GM12878 (cell line): ENCODE measurements at regions of chr1 and their contacts with region 1.

Region 1: GRCh38 chr1:51519048-51519864 is at the start of gene EPS15:
- DNase-seq: no peak
- ATAC-seq: peak; percentile 73
- H3K4me3 ChIP-seq: peak within 1 kb of the TSS; percentile 95
- H3K27ac ChIP-seq: peak within 1 kb of the TSS; percentile 83
- H3K4me1 ChIP-seq: peaks cover 11% of the 10 kb centered on the region
- H3K27me3 ChIP-seq: no peaks in the 10 kb centered on the region
- CTCF ChIP-seq: no peak
- EP300 ChIP-seq: no peak
- POLR2A ChIP-seq: peak; percentile 86
- RAD21 ChIP-seq: peak; percentile 33; the same call in 1 of the 2 replicates
- polyA plus RNA-seq, gene EPS15: 24.7 to 49.5 TPM

Region 2: GRCh38 chr1:51218570-51218969 is 300.7 kb before region 1 on chr1:
- CTCF ChIA-PET with region 1: no interaction called
- POLR2A ChIA-PET with region 1: no interaction called
- RAD21 ChIA-PET with region 1: no interaction called
- SMC1A ChIA-PET with region 1: no interaction called
- in situ Hi-C with region 1: no loop called
- intact Hi-C with region 1: no loop called
- DNase-seq: no peak
- ATAC-seq: no peak
- H3K4me3 ChIP-seq: no peak overlapping the region
- H3K27ac ChIP-seq: no peak overlapping the region
- H3K4me1 ChIP-seq: peaks cover 11% of the 10 kb centered on the region
- H3K27me3 ChIP-seq: no peaks in the 10 kb centered on the region
- CTCF ChIP-seq: peak in 2 of 3 experiments; percentile 5 to 16; a peak in 2 of 6 replicates
- EP300 ChIP-seq: no peak
- POLR2A ChIP-seq: no peak
- RAD21 ChIP-seq: no peak

Region 3: DNA sequence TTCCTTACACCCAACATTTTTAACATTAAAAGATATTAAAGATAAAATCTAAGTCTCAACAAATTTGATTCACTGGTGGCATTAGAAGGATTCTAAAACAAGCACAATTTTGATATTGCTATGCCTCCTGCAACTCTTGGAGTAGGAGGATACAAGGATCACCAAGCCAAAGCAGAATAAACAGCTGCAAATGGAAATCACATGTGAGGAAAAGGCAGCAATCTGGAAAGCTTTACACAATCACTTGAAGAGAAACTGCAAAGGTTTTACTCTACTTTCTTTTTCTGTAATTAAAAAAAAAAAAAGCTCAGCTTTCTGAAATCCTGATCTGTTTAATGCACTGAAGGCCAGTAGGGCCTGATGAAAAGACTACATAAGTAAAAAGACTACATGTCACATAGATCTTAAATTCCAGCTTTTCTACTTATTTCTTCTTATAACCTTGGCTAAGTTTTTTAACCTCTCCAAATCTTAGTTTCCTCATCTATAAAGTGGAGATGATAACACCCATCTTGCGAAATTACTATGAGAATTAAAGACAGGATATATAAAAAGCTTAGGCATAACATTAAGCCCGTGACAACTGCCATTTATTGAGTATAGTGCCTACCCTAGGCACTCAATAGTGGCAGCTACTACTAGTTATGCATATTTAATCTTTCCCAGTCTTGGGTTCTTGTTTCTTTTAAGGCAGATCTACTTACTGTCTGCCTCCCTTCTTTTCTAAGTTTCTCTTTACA is 73.7 kb before region 1 on chr1:
- CTCF ChIA-PET with region 1: interaction called, 4 read pairs
- POLR2A ChIA-PET with region 1: interaction called, 3 read pairs
- RAD21 ChIA-PET with region 1: interaction called, 6 read pairs
- SMC1A ChIA-PET with region 1: interaction called, 30 read pairs
- in situ Hi-C with region 1: no loop called
- intact Hi-C with region 1: loop called (anchors 5 kb)
- DNase-seq: no peak
- ATAC-seq: no peak; the same call in 2 of the 3 replicates
- H3K4me3 ChIP-seq: no peak overlapping the region
- H3K27ac ChIP-seq: peak overlapping the region; percentile 47
- H3K4me1 ChIP-seq: peaks cover 36% of the 10 kb centered on the region
- H3K27me3 ChIP-seq: no peaks in the 10 kb centered on the region
- CTCF ChIP-seq: no peak
- EP300 ChIP-seq: no peak
- POLR2A ChIP-seq: no peak
- RAD21 ChIP-seq: no peak

Region 4: GRCh38 chr1:51491166-51491981 is 27.9 kb before region 1 on chr1:
- CTCF ChIA-PET with region 1: interaction called, 4 read pairs
- POLR2A ChIA-PET with region 1: interaction called, 7 read pairs
- RAD21 ChIA-PET with region 1: interaction called, 15 read pairs
- SMC1A ChIA-PET with region 1: interaction called, 41 read pairs
- in situ Hi-C with region 1: no loop called
- intact Hi-C with region 1: no loop called
- DNase-seq: no peak
- ATAC-seq: peak; percentile 75
- H3K4me3 ChIP-seq: peak overlapping the region; percentile 69; the same call in 1 of the 2 replicates
- H3K27ac ChIP-seq: peak overlapping the region; percentile 72
- H3K4me1 ChIP-seq: peaks cover 45% of the 10 kb centered on the region
- H3K27me3 ChIP-seq: no peaks in the 10 kb centered on the region
- CTCF ChIP-seq: no peak
- EP300 ChIP-seq: 0 out of 4 replicates have a peak, but pooled peaks of 1 of the 2 experiments have one; percentile 3
- POLR2A ChIP-seq: no peak
- RAD21 ChIP-seq: no peak

Region 5: GRCh38 chr1:51506537-51506936 is 12.7 kb before region 1 on chr1:
- CTCF ChIA-PET with region 1: interaction called, 19 read pairs
- POLR2A ChIA-PET with region 1: interaction called, 83 read pairs
- RAD21 ChIA-PET with region 1: interaction called, 111 read pairs
- SMC1A ChIA-PET with region 1: interaction called, 147 read pairs
- in situ Hi-C with region 1: no loop called
- intact Hi-C with region 1: loop called (anchors 2 kb)
- DNase-seq: no peak
- ATAC-seq: peak; percentile 40
- H3K4me3 ChIP-seq: peak overlapping the region; percentile 25; the same call in 1 of the 2 replicates
- H3K27ac ChIP-seq: peak overlapping the region; percentile 74
- H3K4me1 ChIP-seq: peaks cover 37% of the 10 kb centered on the region
- H3K27me3 ChIP-seq: no peaks in the 10 kb centered on the region
- CTCF ChIP-seq: no peak
- EP300 ChIP-seq: peak in 1 of 2 experiments; percentile 73; a peak in 1 of 4 replicates
- POLR2A ChIP-seq: no peak
- RAD21 ChIP-seq: no peak